Endothelial cell of umbilical vein (primary cell): ENCODE measurements at regions of chr6 and their contacts with region 1.

Region 1: GRCh38 chr6:157873735-157874344 is 50.8 kb downstream of the SNX9 start:
- DNase-seq: peak; percentile 79
- H3K4me3 ChIP-seq: no peak overlapping the region
- H3K27ac ChIP-seq: no peak overlapping the region
- H3K4me1 ChIP-seq: peaks cover 10% of the 10 kb centered on the region
- H3K27me3 ChIP-seq: no peaks in the 10 kb centered on the region
- CTCF ChIP-seq: peak; percentile 79 to 87
- POLR2A ChIP-seq: no peak

Region 2: GRCh38 chr6:157667211-157668008 is 206.4 kb before region 1 on chr6:
- CTCF ChIA-PET with region 1: interaction called, 22 read pairs
- POLR2A ChIA-PET with region 1: no interaction called
- dilution Hi-C with region 1: no loop called
- intact Hi-C with region 1: loop called (anchors 2 kb)
- DNase-seq: peak; percentile 73
- H3K4me3 ChIP-seq: no peak overlapping the region
- H3K27ac ChIP-seq: no peak overlapping the region
- H3K4me1 ChIP-seq: peaks cover 7% of the 10 kb centered on the region
- H3K27me3 ChIP-seq: no peaks in the 10 kb centered on the region
- CTCF ChIP-seq: peak; percentile 75 to 88
- POLR2A ChIP-seq: no peak

Region 3: GRCh38 chr6:157764178-157765033 is 109.4 kb before region 1 on chr6:
- CTCF ChIA-PET with region 1: interaction called, 235 read pairs
- POLR2A ChIA-PET with region 1: interaction called, 5 read pairs
- dilution Hi-C with region 1: no loop called
- intact Hi-C with region 1: no loop called
- DNase-seq: peak; percentile 99
- H3K4me3 ChIP-seq: peak overlapping the region in 1 of 3 experiments; percentile 4
- H3K27ac ChIP-seq: peak overlapping the region; percentile 97
- H3K4me1 ChIP-seq: peaks cover 51% of the 10 kb centered on the region
- H3K27me3 ChIP-seq: no peaks in the 10 kb centered on the region
- CTCF ChIP-seq: no peak
- POLR2A ChIP-seq: no peak

Region 4: GRCh38 chr6:157830354-157831017 is 43.4 kb before region 1 on chr6:
- CTCF ChIA-PET with region 1: interaction called, 10 read pairs
- POLR2A ChIA-PET with region 1: no interaction called
- dilution Hi-C with region 1: no loop called
- intact Hi-C with region 1: loop called (anchors 1 kb)
- DNase-seq: no peak
- H3K4me3 ChIP-seq: no peak overlapping the region
- H3K27ac ChIP-seq: no peak overlapping the region
- H3K4me1 ChIP-seq: peaks cover 38% of the 10 kb centered on the region
- H3K27me3 ChIP-seq: no peaks in the 10 kb centered on the region
- CTCF ChIP-seq: no peak
- POLR2A ChIP-seq: no peak

Region 5: DNA sequence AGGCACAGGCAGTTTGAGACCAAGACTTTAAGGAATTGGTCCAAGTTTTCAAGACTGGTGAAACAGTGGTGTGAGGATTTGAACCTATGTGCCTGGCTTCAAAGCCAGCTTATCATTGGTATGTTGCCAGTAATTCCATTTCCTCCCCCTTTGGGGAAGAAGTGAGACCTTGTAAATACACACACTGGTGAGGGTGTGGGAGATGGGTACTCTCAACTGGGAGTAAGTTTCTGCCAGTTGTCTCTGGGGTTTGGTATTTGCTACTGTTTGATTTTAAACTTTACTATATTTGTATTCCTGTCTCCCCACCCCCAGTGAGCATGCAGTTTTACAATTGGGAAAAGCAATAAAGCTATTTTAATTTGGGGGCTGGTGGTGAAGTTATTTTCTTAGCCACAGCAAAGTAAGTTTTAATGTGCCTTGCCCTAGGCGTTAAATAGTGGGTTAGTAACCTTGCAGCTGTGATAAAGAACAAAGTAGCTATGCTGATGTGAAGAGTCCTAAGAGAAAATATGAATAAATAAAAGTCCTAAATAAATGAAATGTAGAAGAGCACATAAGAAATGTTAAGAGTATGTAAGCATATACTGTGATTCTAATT is 19.8 kb before region 1 on chr6:
- CTCF ChIA-PET with region 1: no interaction called
- POLR2A ChIA-PET with region 1: no interaction called
- dilution Hi-C with region 1: no loop called
- intact Hi-C with region 1: no loop called
- DNase-seq: no peak
- H3K4me3 ChIP-seq: no peak overlapping the region
- H3K27ac ChIP-seq: no peak overlapping the region
- H3K4me1 ChIP-seq: no peaks in the 10 kb centered on the region
- H3K27me3 ChIP-seq: no peaks in the 10 kb centered on the region
- CTCF ChIP-seq: no peak
- POLR2A ChIP-seq: no peak

Region 6: GRCh38 chr6:157885211-157885788 is 11.5 kb after region 1 on chr6:
- CTCF ChIA-PET with region 1: interaction called, 12 read pairs
- POLR2A ChIA-PET with region 1: no interaction called
- dilution Hi-C with region 1: no loop called
- intact Hi-C with region 1: no loop called
- DNase-seq: peak; percentile 32
- H3K4me3 ChIP-seq: no peak overlapping the region
- H3K27ac ChIP-seq: no peak overlapping the region
- H3K4me1 ChIP-seq: peaks cover 2% of the 10 kb centered on the region
- H3K27me3 ChIP-seq: no peaks in the 10 kb centered on the region
- CTCF ChIP-seq: no peak
- POLR2A ChIP-seq: no peak

Region 7: GRCh38 chr6:157921685-157922367 is 48.0 kb after region 1 on chr6:
- CTCF ChIA-PET with region 1: no interaction called
- POLR2A ChIA-PET with region 1: no interaction called
- dilution Hi-C with region 1: no loop called
- intact Hi-C with region 1: no loop called
- DNase-seq: no peak
- H3K4me3 ChIP-seq: no peak overlapping the region
- H3K27ac ChIP-seq: no peak overlapping the region
- H3K4me1 ChIP-seq: no peaks in the 10 kb centered on the region
- H3K27me3 ChIP-seq: no peaks in the 10 kb centered on the region
- CTCF ChIP-seq: no peak
- POLR2A ChIP-seq: no peak